ENCODE measurements at regions of chr19 and their contacts with region 1.

Region 1: GRCh38 chr19:47130591-47131227 is at the start of gene SAE1:
- DNase-seq: peak; percentile 95
- ATAC-seq: peak; percentile 89
- H3K4me3 Mint-ChIP-seq: peak within 1 kb of the TSS; percentile 99
- H3K27ac Mint-ChIP-seq: peak within 1 kb of the TSS; percentile 97
- H3K4me1 Mint-ChIP-seq: peaks cover 41% of the 10 kb centered on the region
- H3K27me3 Mint-ChIP-seq: no peaks in the 10 kb centered on the region
- total RNA-seq, gene SAE1: 143 to 156 TPM

Region 2: GRCh38 chr19:46860125-46860845 is 270.4 kb before region 1 on chr19:
- CTCF ChIA-PET with region 1: no interaction called
- POLR2A ChIA-PET with region 1: no interaction called
- intact Hi-C with region 1: loop called in 1 of 2 experiments (anchors 2 kb)
- DNase-seq: peak; percentile 99
- ATAC-seq: peak; percentile 82
- H3K4me3 Mint-ChIP-seq: no peak overlapping the region
- H3K27ac Mint-ChIP-seq: peak overlapping the region; percentile 78
- H3K4me1 Mint-ChIP-seq: peaks cover 25% of the 10 kb centered on the region
- H3K27me3 Mint-ChIP-seq: no peaks in the 10 kb centered on the region

Region 3: GRCh38 chr19:46924874-46925547 is 205.7 kb before region 1 on chr19:
- CTCF ChIA-PET with region 1: no interaction called
- POLR2A ChIA-PET with region 1: no interaction called
- intact Hi-C with region 1: no loop called
- DNase-seq: peak; percentile 29
- ATAC-seq: peak; percentile 82
- H3K4me3 Mint-ChIP-seq: no peak overlapping the region
- H3K27ac Mint-ChIP-seq: peak overlapping the region; percentile 55
- H3K4me1 Mint-ChIP-seq: peaks cover 41% of the 10 kb centered on the region
- H3K27me3 Mint-ChIP-seq: no peaks in the 10 kb centered on the region

Region 4: DNA sequence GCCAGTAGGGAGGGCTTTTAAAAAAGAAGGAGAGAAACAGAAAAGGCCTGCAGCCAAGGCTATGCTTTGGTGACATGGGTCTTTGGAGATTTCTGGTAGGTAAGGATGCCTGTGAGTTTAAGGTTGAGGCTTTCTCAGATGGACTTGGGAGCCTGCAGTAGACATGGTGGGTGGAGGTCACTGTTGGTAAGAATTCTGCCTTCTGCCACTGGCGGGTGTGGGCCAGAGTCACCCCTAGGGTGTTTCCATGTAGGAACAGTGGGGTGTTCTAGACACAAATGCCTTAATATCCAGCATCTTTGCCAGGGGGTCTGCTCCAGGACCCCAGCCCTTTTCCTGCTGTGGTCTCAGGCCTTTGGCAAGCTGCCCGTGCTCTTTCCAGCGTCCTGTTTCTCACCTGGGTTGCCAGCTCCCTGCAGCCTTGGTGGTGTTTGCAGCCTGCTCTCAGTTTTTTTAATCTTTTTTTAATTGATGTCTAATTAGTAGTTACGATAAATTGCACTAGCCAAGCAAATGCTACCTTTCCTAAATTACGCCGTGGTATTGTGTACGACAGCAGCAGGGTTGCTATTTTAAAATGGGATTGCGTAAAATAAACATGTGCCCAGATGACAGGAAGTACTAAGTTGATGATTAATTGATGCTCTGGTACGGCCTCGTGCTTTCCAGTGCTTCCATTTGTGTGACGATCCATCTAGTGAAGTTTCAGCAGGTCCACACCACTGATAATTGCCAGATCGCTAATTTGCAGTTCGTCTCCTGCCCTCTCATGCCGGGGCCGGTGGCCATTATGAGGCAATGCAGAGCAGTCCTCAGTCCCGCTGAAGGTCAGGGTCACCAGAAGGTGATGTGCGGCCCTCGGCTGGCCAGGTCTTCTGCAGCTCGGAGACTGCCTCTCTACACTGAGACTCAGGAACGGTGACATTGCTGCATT is 146.4 kb before region 1 on chr19:
- CTCF ChIA-PET with region 1: no interaction called
- POLR2A ChIA-PET with region 1: no interaction called
- intact Hi-C with region 1: no loop called
- DNase-seq: no peak
- ATAC-seq: no peak
- H3K4me3 Mint-ChIP-seq: no peak overlapping the region
- H3K27ac Mint-ChIP-seq: no peak overlapping the region
- H3K4me1 Mint-ChIP-seq: peaks cover 4% of the 10 kb centered on the region
- H3K27me3 Mint-ChIP-seq: no peaks in the 10 kb centered on the region

Region 5: GRCh38 chr19:47013041-47013517 is 117.6 kb before region 1 on chr19:
- CTCF ChIA-PET with region 1: interaction called, 17 read pairs
- POLR2A ChIA-PET with region 1: interaction called, 3 read pairs
- intact Hi-C with region 1: loop called (anchors 1 to 2 kb)
- DNase-seq: peak; percentile 79
- ATAC-seq: peak; percentile 87
- H3K4me3 Mint-ChIP-seq: no peak overlapping the region
- H3K27ac Mint-ChIP-seq: no peak overlapping the region
- H3K4me1 Mint-ChIP-seq: peaks cover 7% of the 10 kb centered on the region
- H3K27me3 Mint-ChIP-seq: no peaks in the 10 kb centered on the region

Region 6: DNA sequence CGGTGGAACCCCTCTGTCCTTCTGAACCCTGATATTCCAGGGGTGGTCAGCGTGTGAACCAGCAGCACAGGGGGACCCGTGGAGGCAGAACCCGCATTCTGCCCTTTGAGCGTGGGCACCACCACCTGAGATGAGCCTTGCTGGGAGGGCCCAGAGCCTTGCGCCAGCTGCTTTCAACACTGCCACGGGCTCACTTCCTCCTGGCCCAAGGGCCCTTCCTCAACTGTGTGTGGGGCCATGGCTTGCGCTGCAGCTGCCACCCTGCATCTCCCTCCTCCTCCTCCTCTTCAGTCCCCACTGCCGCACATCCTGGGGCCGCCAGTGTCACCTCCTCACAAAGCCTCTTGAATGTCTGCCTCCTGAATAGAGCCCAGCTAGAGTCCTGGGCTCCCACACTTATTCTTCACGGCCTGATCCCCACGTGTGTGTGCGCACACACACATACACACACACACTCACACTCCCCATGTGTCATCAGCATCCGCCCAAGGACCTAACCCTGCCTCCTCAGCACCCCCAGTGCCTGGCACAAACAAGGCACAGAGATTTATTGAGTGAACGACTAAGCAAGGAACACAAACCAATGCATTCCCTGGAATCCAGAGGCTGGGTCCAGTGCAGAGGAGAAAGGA is 55.4 kb before region 1 on chr19:
- CTCF ChIA-PET with region 1: interaction called, 20 read pairs
- POLR2A ChIA-PET with region 1: no interaction called
- intact Hi-C with region 1: loop called (anchors 1 kb)
- DNase-seq: no peak
- ATAC-seq: no peak
- H3K4me3 Mint-ChIP-seq: no peak overlapping the region
- H3K27ac Mint-ChIP-seq: no peak overlapping the region
- H3K4me1 Mint-ChIP-seq: peaks cover 3% of the 10 kb centered on the region
- H3K27me3 Mint-ChIP-seq: no peaks in the 10 kb centered on the region

Region 7: GRCh38 chr19:47225746-47226425 is 95.2 kb after region 1 on chr19:
- CTCF ChIA-PET with region 1: no interaction called
- POLR2A ChIA-PET with region 1: no interaction called
- intact Hi-C with region 1: loop called in 1 of 2 experiments (anchors 1 kb)
- DNase-seq: peak; percentile 93
- ATAC-seq: peak; percentile 70
- H3K4me3 Mint-ChIP-seq: peak overlapping the region; percentile 77
- H3K27ac Mint-ChIP-seq: no peak overlapping the region
- H3K4me1 Mint-ChIP-seq: peaks cover 16% of the 10 kb centered on the region
- H3K27me3 Mint-ChIP-seq: no peaks in the 10 kb centered on the region

Measured in activated CD4-positive, alpha-beta T cell treated with anti-CD3 and anti-CD28 coated beads for 36 hours (primary cell).